Right cardiac atrium (tissue), 5 donors: ENCODE measurements at regions of chr11 and their contacts with region 1.

Region 1: GRCh38 chr11:14519917-14520746 is at the start of gene PSMA1:
- DNase-seq: peak; percentile 95 to 98 (median 97)
- ATAC-seq: peak; percentile 98 to 99
- H3K4me3 ChIP-seq: peak within 1 kb of the TSS; percentile 98
- H3K27ac ChIP-seq: peak within 1 kb of the TSS; percentile 97
- H3K4me1 ChIP-seq: no peaks in the 10 kb centered on the region
- H3K27me3 ChIP-seq: no peaks in the 10 kb centered on the region
- total RNA-seq, gene PSMA1: 105 to 132 (median 117) TPM

Region 2: DNA sequence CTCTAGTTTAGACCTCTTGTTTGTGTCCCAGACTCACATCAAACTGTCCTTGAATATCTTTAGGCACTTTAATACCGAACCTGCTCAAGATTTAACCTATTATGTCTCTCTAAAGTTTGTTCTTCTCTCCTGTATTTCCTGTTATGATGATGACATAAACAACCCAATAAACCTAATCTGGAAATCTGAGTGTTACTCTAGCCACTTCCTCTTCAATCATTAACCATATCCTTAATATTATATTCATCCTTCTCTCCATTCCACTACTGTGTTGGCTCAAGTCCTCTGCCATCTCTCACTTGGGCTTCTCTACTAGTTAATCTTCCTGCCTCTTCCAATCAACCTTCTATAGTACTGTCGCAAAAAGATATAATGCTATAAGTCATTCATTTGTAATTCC is 56.5 kb before region 1 on chr11:
- intact Hi-C with region 1: loop called in 1 of 4 experiments (anchors 10 kb)
- DNase-seq: no peak
- ATAC-seq: no peak
- H3K4me3 ChIP-seq: no peak overlapping the region
- H3K27ac ChIP-seq: no peak overlapping the region
- H3K4me1 ChIP-seq: no peaks in the 10 kb centered on the region
- H3K27me3 ChIP-seq: no peaks in the 10 kb centered on the region

Region 3: GRCh38 chr11:14619603-14620531 is 99.7 kb after region 1 on chr11:
- intact Hi-C with region 1: no loop called
- DNase-seq: peak in 2 of 3 donors; percentile 46 to 62
- ATAC-seq: peak; percentile 21 to 72
- H3K4me3 ChIP-seq: no peak overlapping the region
- H3K27ac ChIP-seq: no peak overlapping the region
- H3K4me1 ChIP-seq: peaks cover 1% of the 10 kb centered on the region
- H3K27me3 ChIP-seq: no peaks in the 10 kb centered on the region